Right ventricle myocardium inferior (tissue), 1 donor: ENCODE measurements at regions of chr1 and their contacts with region 1.

Region 1: DNA sequence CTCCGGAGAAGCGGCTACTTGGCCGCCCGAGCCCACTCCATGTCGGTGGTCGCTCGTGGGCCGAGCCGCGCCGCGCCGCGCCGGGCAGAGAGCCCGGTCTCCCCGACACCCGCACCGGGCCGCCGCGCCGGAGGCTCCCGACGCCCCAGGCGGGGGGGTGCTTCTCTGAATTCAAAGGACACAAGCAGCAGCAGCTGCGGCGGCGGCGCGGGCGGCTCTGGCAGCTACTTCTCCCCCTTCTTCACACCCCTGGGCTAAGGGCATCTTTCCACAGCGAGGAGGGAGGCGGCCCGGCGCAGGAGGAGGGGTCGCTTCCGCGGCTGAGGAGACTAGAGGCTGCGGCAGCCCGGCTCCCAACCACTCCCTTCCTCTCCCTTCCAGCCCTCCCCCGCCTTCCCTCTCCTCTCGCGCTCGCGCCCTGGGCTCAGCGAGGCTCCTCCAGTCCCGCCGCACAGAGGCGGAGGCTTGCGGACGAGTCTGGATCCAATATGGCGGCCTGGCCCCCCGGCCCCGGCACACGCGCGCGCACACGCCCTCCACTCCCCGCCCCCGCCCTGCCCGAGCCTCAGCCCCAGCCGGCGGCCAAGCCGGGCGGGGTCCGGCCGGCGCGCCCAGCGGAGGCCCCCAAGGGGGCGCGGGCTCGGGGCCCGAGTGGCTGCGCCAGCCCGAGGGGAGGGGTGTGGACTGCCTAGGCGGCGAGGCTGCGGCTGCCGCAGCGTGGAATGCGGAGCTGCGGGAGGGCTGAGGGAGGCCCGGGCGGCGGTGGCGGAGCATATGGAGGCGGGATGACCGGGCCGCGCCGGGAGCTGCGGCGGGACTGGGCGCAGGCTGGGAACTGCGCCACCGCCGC is at the start of gene CDC42BPA:
- DNase-seq: peak; percentile 94
- ATAC-seq: peak; percentile 92
- total RNA-seq, gene CDC42BPA: 37.2 TPM

Region 2: DNA sequence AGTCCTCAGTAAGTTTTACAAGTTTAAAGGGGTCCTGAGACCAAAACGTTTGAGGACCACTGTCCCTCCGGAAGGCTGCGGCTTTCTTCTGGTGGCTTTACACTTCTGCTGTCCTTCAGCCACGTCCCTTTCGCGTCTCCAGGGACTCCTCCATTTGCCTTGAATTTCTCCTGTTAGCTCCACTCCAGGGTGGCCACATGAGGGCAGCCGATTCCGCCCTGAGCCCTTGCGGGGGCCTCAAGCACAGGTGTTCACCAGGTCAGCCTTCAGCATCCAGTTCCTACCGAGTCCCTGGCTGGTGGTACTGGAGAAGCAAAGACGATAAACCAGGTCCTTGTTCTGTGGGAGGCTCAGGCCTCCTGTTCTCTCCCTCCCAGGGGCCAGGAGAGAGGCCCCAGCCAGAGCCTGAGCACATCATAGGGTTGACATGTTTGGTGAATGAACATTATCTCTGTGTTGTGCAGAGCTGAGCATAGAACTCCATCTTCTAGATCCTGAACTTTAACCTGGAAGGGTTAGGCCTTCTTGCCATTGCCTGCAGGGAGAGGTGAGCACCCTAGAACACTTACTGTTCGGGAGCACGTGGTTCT is 405.5 kb before region 1 on chr1:
- intact Hi-C with region 1: loop called (anchors 10 kb)
- DNase-seq: no peak
- ATAC-seq: peak; percentile 77

Region 3: DNA sequence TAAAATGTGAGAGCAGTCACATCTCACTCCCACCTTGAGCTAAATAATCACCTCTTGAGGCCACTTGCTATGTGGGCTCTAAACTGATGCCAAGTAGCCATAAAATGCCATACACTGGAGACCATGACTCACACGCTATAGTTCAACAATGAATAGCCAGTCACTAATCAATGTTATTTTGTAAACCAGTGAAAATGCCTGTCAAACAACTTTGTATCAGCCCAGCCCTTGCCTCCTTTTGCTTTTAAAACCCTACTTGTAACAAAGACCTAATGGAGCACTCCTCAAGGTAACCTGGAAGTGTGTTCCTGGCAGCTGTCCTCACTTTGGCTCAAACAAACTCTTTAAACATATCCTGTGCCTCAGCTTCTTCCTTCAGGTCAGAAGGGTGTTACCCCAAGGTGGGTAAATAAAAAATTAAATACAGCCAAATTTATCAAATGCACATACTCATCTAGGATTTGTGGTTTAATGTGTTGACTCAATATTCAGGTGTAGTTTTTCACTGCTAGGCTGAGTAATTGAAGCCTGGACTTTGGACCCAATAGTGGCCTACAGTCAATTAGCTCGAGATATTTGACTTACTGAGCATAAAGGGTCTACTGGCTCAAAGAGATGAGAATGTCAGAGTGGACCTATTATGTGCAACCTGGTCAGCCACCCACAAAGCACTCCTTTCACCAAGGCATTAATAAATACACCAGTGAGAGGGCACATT is 223.8 kb before region 1 on chr1:
- intact Hi-C with region 1: no loop called
- DNase-seq: no peak
- ATAC-seq: no peak

Region 4: GRCh38 chr1:227131193-227131592 is 187.0 kb before region 1 on chr1:
- intact Hi-C with region 1: loop called (anchors 10 kb)
- DNase-seq: no peak
- ATAC-seq: no peak

Region 5: DNA sequence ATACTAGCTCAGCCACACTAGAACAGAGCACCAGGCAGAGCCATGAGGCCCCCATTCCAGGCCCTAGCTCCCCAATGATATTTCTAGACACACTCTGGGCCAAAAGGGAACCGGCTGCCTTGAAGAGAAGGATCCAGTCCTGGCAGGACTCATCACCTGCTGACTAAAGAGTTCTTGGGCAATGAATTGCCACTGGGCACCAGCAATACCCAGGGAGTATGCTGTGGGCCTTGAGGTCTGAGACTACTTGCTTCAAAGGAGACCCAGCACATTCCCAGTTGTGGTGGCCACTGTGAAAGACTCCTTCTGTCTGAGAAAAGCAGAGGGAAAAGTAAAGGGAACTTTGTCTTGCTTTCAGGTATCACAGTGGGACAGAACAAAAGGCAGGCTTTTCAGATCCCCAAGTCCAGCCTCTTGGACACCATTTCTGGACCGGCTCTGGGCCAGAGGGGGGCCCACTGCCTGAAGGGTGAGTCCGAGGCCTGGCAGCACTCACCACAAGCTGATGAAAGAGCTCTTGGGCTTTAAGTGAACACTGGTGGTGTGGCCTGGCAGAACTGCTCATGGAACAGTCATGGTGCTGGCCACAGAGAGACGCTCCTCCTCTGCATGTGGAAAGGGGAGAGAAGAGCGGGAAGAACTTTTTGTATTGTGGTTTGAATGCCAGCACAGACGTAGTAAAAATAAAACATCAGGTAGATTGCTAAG is 72.5 kb before region 1 on chr1:
- intact Hi-C with region 1: loop called (anchors 5 kb)
- DNase-seq: no peak
- ATAC-seq: peak; percentile 86

Region 6: DNA sequence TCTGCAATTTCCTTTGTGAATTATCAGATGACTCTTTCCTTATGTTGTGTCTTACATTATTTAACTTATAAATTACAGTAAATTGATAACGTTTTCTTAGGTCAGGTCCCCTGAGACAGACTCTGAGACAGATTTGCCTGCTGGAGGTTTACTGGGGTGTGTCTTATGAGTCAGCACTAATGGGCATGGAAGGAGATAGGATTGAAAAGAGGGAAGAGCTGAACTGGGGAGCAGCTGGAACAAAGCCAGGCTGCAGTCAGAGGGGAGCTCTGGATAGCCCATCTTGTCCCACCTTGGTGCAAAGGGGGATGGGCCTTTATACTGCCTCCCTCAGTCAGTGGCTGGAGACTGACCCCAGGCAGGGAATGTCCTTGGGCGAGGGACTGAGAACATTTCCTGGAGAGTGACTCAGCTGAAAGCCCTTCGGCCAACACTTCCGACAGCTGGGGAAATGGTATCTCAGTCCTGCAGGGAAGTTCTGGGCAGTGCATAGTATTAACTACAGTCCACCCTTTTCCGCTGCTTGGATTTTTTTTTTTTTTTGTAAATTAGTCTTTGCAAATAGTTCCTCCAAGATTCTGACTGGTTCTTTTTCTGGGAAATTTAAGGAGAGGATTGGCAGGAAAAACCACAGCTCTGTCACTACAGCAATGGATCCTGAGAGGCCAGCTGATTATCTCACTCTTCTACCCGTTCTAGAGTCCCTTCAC is 39.1 kb after region 1 on chr1:
- intact Hi-C with region 1: loop called (anchors 2 kb)
- DNase-seq: peak; percentile 73
- ATAC-seq: peak; percentile 98

Region 7: GRCh38 chr1:227428803-227429202 is 110.6 kb after region 1 on chr1:
- intact Hi-C with region 1: loop called (anchors 2 kb)
- DNase-seq: no peak
- ATAC-seq: peak; percentile 43

Region 8: DNA sequence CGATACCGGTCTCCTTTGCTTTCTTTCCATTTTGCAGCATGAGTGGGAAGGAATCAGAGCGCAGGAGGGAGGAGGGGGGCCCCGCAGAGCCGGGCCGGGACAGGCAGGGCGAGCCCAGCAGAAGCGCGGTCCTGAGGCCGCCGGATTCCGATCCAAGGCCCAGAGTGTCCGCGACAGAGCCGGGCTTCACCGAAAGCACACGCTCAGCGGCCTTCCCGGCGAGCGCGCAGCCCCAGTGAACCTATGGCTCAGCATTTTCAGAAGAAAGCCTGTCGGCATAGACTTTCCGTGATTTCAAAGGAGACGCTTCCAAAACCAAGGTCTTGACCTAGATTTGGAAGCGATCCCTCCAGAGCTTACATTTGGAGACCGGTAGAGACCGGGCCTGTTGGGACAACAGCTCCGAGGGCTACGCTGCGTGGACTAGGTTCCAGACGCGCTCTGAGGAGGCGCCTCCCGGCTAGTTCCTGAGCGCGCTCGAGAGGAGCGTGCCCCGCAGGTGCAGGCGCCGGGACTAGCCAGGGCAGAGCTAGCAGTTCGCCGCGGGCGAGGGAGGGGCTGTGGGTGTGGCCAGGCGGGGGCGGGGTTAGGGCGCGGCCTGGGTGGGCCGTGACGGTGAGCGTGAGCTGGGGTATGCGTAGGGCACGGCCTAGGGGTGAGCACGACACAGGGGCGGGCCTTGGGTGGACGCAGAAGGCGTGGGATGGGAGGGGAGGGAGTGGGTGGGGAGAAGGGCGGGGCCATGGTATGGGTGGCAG is 469.5 kb after region 1 on chr1:
- intact Hi-C with region 1: loop called (anchors 5 kb)
- DNase-seq: peak; percentile 96
- ATAC-seq: peak; percentile 97